ENCODE measurements at regions of chr17 and their contacts with region 1.

Region 1: GRCh38 chr17:39769974-39770587 is 32.3 kb downstream of the GRB7 start:
- DNase-seq: peak; percentile 86
- H3K4me3 Mint-ChIP-seq: no peak overlapping the region
- H3K27ac Mint-ChIP-seq: peak overlapping the region; percentile 86
- H3K4me1 Mint-ChIP-seq: peaks cover 88% of the 10 kb centered on the region
- H3K27me3 Mint-ChIP-seq: no peaks in the 10 kb centered on the region

Region 2: DNA sequence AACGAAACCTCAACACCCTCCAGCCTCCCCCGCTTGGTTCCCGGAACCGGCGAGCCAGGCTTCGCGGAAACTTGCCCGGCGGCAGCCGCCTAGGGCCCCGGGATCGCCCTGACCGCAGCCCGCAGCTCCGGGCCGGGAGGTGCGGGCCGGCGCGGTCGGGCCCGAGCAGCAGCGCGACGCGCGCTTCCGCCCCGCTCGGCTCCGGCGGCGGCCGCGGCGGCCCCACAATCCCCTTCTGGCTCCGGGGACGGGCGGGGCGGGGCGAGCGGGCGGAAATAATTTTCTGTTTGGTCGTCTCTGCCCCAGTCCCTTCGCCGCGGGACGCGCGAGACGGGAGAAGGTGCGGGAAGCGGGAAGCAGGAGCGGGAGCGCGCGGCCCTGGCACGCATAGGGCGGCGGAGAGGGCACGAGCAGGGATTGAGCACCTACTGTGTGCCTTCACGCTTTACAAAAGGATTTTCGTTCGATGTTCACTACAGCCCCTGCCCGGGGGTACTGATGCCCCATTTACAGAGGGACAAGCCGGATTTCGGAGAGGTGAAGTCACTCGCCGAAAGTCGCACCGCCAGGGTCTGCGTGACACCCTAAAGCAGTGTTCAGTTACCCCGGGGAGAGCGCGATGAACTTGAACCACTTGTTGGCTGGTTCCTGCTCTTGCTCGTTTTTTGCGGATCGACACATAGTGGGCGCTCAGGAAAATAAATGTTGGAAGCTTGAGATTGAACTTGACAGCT is 1067.7 kb before region 1 on chr17:
- CTCF ChIA-PET with region 1: no interaction called
- intact Hi-C with region 1: loop called (anchors 5 kb)
- DNase-seq: peak; percentile 92
- H3K4me3 Mint-ChIP-seq: peak overlapping the region; percentile 100
- H3K27ac Mint-ChIP-seq: peak overlapping the region; percentile 100
- H3K4me1 Mint-ChIP-seq: peaks cover 45% of the 10 kb centered on the region
- H3K27me3 Mint-ChIP-seq: no peaks in the 10 kb centered on the region

Region 3: GRCh38 chr17:39538866-39539265 is 231.2 kb before region 1 on chr17:
- CTCF ChIA-PET with region 1: no interaction called
- intact Hi-C with region 1: no loop called
- DNase-seq: no peak
- H3K4me3 Mint-ChIP-seq: no peak overlapping the region
- H3K27ac Mint-ChIP-seq: no peak overlapping the region
- H3K4me1 Mint-ChIP-seq: peaks cover 9% of the 10 kb centered on the region
- H3K27me3 Mint-ChIP-seq: no peaks in the 10 kb centered on the region

Region 4: DNA sequence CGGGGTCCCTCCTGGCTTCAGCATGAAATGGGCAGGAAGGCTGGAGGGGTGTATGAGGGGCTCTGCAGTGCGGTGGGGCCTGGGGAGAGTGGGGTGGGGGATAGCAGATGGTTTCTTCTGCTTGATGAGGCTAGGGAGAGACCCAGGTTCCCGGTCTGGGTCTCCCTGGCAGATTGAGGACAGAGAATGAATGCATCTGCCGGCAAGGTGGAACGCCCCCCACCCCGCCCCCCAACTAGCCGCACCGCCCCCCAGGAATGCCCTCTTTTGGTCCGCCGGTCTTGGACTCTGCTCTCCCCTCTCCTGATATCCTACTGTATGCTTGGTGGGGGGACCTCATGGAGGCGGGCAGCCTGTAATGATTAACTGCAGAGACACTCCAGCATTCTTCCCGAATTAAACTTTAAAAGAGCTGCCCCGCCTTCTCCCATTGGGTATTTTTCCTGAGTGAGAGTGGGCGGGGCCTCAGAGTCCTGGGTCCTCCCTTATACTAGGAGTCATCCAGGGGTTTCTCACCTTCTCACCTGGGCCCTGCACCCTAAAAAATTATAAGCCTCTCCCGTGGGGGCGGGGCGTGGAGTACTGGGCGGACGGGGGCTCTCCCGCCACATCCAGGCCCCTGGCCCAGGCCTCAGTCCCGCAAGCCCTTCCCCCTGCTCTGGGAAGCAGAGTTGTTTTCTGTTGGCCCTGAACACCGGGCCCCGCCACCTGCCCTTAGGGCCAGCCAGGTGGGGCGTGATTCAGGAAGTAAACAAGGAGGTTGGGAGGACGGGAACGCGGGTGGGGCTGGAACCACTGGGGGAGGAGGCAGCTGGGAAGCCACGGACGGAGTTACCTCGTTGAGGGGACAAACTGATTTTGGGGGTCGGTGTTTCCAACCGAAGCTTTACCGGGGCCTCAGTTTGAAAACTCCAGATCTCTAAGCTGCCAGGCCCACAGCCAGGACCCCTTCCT is 30.9 kb before region 1 on chr17:
- CTCF ChIA-PET with region 1: no interaction called
- intact Hi-C with region 1: loop called (anchors 2 kb)
- DNase-seq: peak; percentile 29
- H3K4me3 Mint-ChIP-seq: peak overlapping the region; percentile 77
- H3K27ac Mint-ChIP-seq: no peak overlapping the region
- H3K4me1 Mint-ChIP-seq: peaks cover 23% of the 10 kb centered on the region
- H3K27me3 Mint-ChIP-seq: peaks cover 15% of the 10 kb centered on the region

Region 5: GRCh38 chr17:39822051-39822451 is 52.0 kb after region 1 on chr17:
- CTCF ChIA-PET with region 1: interaction called, 4 read pairs
- intact Hi-C with region 1: loop called (anchors 1 kb)
- DNase-seq: peak; percentile 49
- H3K4me3 Mint-ChIP-seq: no peak overlapping the region
- H3K27ac Mint-ChIP-seq: no peak overlapping the region
- H3K4me1 Mint-ChIP-seq: peaks cover 52% of the 10 kb centered on the region
- H3K27me3 Mint-ChIP-seq: no peaks in the 10 kb centered on the region

Region 6: DNA sequence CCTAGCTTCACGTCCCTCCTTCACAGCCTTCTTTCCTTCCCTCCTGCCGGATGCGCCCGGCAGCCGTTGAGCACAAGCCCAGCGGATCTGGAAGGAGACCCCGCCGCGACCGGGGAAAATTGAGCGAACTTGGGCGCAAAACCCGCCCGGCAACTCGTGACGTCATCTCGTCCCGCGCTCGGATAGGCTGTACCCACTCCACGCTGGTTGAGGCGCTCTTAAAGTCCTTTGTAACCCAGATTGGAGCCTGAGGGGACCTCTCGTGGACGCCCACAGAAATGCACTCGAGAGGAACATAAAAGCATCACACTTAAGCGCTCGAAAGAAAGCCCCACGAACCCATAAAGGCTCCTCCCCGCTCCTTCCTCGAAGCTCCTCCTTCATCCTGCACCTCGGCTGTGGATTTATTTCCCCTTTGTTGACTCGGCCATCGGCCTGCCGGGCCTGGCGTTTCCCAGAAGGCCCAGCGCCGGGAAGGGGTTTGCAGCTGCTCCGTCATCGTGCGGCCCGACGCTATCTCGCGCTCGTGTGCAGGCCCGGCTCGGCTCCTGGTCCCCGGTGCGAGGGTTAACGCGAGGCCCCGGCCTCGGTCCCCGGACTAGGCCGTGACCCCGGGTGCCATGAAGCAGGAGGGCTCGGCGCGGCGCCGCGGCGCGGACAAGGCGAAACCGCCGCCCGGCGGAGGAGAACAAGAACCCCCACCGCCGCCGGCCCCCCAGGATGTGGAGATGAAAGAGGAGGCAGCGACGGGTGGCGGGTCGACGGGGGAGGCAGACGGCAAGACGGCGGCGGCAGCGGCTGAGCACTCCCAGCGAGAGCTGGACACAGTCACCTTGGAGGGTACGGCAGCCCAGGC is 210.5 kb after region 1 on chr17 and contains the start of gene PSMD3:
- CTCF ChIA-PET with region 1: no interaction called
- intact Hi-C with region 1: loop called (anchors 2 kb)
- DNase-seq: peak; percentile 99
- H3K4me3 Mint-ChIP-seq: peak within 1 kb of the TSS; percentile 88
- H3K27ac Mint-ChIP-seq: peak within 1 kb of the TSS; percentile 80
- H3K4me1 Mint-ChIP-seq: peaks cover 39% of the 10 kb centered on the region
- H3K27me3 Mint-ChIP-seq: peaks cover 2% of the 10 kb centered on the region
- total RNA-seq, gene PSMD3: 122 to 125 TPM

Region 7: DNA sequence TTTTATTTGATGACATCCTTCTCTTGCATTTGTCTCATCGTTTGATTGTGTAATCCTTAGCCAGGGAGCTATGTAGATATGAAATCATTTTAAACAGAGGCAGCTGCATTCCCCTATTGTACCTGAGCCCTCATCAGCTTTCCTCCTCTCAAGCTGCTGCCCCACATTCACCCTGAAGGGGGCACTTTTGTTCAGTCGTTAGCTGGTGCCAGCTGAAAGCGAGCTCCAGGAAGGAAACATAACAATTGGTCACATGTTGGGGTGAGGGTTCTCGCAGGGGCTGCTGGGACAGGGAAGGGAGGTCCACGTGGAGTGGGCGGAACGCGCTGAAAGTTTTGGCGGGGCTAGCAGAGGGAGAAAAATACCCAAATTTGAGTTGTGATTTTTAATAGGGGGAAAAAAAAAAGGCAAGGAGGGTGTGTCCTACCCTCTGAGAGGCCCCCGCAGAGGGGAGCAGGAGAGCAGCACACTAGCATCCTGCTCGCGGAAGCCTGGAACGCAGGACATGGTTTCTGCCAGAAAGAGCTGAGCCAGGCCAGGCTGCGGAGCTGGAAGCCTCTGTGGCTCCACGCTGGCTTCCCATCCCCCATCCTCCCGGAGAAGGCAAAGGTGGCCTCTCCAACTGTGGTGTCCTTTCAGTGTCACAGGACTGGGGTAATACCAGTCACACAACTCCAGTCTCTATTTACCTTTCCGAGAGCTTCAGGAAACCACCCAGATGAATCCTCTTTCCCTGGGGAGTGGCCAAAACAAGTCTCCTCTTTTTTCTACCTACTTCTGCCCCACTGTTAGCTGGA is 343.2 kb after region 1 on chr17:
- CTCF ChIA-PET with region 1: no interaction called
- intact Hi-C with region 1: no loop called
- DNase-seq: peak; percentile 98
- H3K4me3 Mint-ChIP-seq: peak overlapping the region; percentile 81
- H3K27ac Mint-ChIP-seq: peak overlapping the region; percentile 91
- H3K4me1 Mint-ChIP-seq: peaks cover 52% of the 10 kb centered on the region
- H3K27me3 Mint-ChIP-seq: no peaks in the 10 kb centered on the region